ENCODE measurements at regions of chr1 and their contacts with region 1.

Region 1: DNA sequence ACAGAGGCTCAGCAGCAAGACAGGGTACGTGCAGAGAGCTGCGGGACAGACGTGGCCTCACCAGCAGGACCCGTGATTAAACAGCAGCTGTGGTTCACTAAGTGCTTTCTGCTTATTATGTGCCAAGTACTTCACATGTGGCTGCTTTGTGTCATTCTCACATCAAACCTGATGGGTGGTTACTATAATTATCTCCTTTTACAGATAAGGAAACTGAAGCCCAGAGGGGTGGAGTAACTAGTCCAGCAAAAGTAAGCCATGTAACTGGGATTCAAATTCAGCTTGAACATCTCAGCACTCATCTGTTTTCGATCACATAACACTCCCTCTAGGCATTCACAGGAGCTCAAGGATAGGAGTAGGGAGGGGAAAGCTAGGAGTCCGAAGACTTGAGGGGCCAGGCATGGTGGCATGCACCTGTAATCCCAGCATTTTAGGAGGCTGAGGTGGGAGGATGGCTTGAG is 50.8 kb upstream of the CLIC4 start:
- DNase-seq: peak; percentile 47
- ATAC-seq: peak; percentile 48 to 77
- H3K4me3 ChIP-seq: no peak overlapping the region
- H3K27ac ChIP-seq: peak overlapping the region; percentile 76
- H3K4me1 ChIP-seq: peaks cover 45% of the 10 kb centered on the region
- H3K27me3 ChIP-seq: no peaks in the 10 kb centered on the region
- CTCF ChIP-seq: no peak

Region 2: DNA sequence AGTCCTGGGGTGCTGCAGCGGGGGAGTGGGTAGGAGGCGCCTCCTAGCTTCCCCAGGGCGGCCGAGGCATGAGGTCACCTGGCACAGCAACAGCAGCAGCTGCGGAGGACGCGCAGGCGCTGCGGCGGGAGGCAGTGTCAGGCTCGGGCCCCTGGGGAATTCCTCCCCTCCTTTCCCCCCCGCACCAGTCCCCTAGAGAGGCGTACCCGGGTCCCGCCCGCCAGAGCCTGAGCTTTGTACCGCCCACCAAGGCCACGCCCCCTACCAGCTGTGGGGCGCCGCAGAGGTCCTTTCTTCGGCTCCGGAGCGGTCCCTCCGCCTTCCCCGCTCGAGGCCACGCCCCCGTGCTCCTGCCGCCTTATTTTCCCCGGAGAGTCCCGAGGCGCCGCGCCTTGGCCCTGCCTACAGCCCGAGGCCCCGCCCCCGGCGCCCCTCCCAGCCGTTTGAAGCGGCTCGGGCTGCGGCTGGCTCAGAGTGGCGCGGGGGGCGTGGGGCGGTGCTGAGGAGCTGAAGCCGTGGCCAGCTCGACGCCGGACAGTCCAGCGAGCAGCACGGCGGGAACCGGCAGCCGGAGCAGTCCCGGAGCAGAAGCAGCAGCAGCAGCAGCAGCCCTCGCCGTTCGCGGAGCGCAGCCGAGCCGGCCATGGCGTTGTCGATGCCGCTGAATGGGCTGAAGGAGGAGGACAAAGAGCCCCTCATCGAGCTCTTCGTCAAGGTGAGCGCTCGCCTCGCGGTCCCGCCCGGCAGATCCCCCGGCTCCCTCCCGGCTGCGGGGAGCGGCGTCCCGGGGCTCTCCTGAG is 50.7 kb after region 1 on chr1 and contains the start of gene CLIC4:
- intact Hi-C with region 1: loop called (anchors 5 kb)
- DNase-seq: peak; percentile 100
- ATAC-seq: peak; percentile 97 to 99
- H3K4me3 ChIP-seq: peak within 1 kb of the TSS; percentile 80
- H3K27ac ChIP-seq: peak within 1 kb of the TSS; percentile 93
- H3K4me1 ChIP-seq: peaks cover 48% of the 10 kb centered on the region
- H3K27me3 ChIP-seq: no peaks in the 10 kb centered on the region
- CTCF ChIP-seq: peak; percentile 14
- total RNA-seq, gene CLIC4: 169 TPM

Region 3: GRCh38 chr1:24830680-24831272 is 136.4 kb after region 1 on chr1:
- intact Hi-C with region 1: loop called (anchors 5 kb)
- DNase-seq: no peak
- ATAC-seq: peak; percentile 76 to 89
- H3K4me3 ChIP-seq: no peak overlapping the region
- H3K27ac ChIP-seq: no peak overlapping the region
- H3K4me1 ChIP-seq: peaks cover 59% of the 10 kb centered on the region
- H3K27me3 ChIP-seq: no peaks in the 10 kb centered on the region
- CTCF ChIP-seq: peak; percentile 74

Region 4: GRCh38 chr1:25022361-25023189 is 328.2 kb after region 1 on chr1:
- intact Hi-C with region 1: no loop called
- DNase-seq: peak; percentile 83
- ATAC-seq: peak; percentile 85 to 89
- H3K4me3 ChIP-seq: peak overlapping the region; percentile 8
- H3K27ac ChIP-seq: peak overlapping the region; percentile 71
- H3K4me1 ChIP-seq: peaks cover 23% of the 10 kb centered on the region
- H3K27me3 ChIP-seq: no peaks in the 10 kb centered on the region
- CTCF ChIP-seq: no peak